ENCODE measurements at regions of chr6 and their contacts with region 1.

Region 1: GRCh38 chr6:27687154-27688013 is 214.5 kb upstream of the ZNF184 start:
- DNase-seq: peak; percentile 87
- H3K4me3 Mint-ChIP-seq: peak overlapping the region; percentile 92
- H3K27ac Mint-ChIP-seq: peak overlapping the region; percentile 89
- H3K4me1 Mint-ChIP-seq: peaks cover 5% of the 10 kb centered on the region
- H3K27me3 Mint-ChIP-seq: no peaks in the 10 kb centered on the region
- CTCF ChIP-seq: peak; percentile 86

Region 2: GRCh38 chr6:27312146-27312949 is 375.0 kb before region 1 on chr6 and contains the start of gene POM121L2:
- CTCF ChIA-PET with region 1: interaction called, 4 read pairs
- POLR2A ChIA-PET with region 1: interaction called, 4 read pairs
- intact Hi-C with region 1: loop called (anchors 5 kb)
- DNase-seq: peak; percentile 84
- H3K4me3 Mint-ChIP-seq: peak within 1 kb of the TSS; percentile 73
- H3K27ac Mint-ChIP-seq: no peak within 1 kb of the TSS
- H3K4me1 Mint-ChIP-seq: no peaks in the 10 kb centered on the region
- H3K27me3 Mint-ChIP-seq: peaks cover 12% of the 10 kb centered on the region
- CTCF ChIP-seq: peak; percentile 87
- total RNA-seq, gene POM121L2: not detected in 2 replicates

Region 3: GRCh38 chr6:27503436-27504030 is 183.9 kb before region 1 on chr6:
- CTCF ChIA-PET with region 1: no interaction called
- POLR2A ChIA-PET with region 1: interaction called, 3 read pairs
- intact Hi-C with region 1: loop called (anchors 5 kb)
- DNase-seq: peak; percentile 74
- H3K4me3 Mint-ChIP-seq: peak overlapping the region; percentile 83
- H3K27ac Mint-ChIP-seq: peak overlapping the region; percentile 84
- H3K4me1 Mint-ChIP-seq: peaks cover 11% of the 10 kb centered on the region
- H3K27me3 Mint-ChIP-seq: no peaks in the 10 kb centered on the region
- CTCF ChIP-seq: no peak

Region 4: DNA sequence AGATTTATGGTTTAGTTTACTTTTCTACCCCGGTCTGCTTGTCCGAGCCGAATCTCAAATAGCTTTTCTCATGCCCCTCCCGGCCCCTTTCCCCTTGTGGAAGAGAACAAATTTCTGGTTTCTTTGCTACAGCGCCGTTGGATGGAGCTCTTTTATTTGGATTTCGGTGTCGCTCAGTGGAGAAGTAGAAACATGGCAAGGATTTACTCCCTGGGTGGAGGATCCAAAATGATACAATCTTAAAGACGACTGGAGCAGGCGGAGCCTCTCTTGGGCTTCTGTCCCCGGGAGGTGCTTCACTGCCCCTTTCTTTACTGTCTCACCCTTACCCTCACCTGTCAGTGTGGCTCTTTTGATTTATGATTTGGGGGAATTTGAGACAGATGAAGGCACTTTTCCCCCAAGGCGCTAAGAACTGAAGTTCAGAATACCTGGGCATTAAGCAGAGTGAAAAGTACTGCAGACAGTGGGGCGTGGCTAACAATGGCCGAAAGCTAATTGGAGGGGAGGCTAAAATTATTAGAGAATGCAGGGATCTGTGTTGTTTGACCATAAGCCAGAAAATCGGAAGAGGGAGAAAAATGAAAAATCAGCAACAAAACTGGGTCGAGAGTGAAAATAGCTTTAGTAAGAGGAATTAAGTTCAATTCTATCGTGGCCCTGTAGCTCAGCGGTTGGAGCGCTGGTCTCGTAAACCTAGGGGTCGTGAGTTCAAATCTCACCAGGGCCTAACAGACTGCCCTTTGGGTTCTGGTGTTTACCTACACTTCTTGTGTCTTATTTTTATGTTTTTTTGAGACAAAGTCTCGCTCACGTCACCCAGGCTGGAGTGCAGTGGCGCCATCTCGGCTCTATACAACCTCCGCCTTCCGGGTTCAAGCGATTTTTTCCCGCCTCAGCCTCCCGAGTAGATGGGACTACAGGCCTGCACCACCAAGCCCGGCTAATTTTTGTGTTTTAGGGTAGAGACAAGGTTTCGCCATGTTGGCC is 69.4 kb before region 1 on chr6:
- CTCF ChIA-PET with region 1: interaction called, 11 read pairs
- POLR2A ChIA-PET with region 1: interaction called, 20 read pairs
- intact Hi-C with region 1: loop called (anchors 1 kb)
- DNase-seq: peak; percentile 68
- H3K4me3 Mint-ChIP-seq: peak overlapping the region; percentile 89
- H3K27ac Mint-ChIP-seq: peak overlapping the region; percentile 86
- H3K4me1 Mint-ChIP-seq: peaks cover 6% of the 10 kb centered on the region
- H3K27me3 Mint-ChIP-seq: no peaks in the 10 kb centered on the region
- CTCF ChIP-seq: peak; percentile 9

Region 5: DNA sequence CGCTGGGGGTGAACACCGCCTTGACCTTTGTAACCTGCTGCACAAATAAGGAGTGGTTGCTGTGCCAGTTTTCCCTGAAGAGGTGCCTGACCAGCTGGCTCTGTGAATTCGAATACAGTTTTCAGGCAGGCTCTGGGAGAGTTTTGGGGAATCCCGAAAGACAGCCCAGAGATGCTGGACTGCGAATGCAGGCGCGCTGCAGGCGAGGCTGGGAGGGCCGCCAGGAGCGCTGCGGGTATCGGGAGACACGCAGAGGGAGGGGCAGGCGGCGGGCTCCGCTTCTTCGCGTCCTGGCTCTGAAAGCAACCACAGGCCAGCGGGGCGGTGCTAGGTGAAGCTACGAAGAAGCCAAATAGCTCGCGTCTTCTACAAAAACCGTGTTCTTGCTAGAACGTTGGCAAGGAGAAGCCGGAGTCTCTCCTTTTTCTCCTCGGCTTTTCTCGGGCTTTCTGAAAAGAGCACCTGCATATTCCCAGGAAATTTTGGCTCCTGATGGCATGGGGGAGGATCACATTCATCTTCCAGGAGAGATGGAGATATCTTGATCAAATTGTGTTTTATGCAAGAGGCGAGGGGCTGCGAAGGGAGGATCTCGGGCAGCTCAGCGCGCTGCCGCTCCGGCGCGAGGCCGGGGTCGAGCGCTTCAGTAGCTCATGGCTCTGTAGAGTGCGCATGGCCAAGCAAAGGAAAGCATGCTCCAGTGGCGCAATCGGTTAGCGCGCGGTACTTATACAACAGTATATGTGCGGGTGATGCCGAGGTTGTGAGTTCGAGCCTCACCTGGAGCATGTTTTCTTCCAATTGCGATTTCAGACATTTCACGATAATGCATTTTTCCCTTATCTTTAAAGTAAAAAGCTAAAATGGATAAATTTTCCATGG is 56.4 kb before region 1 on chr6:
- CTCF ChIA-PET with region 1: interaction called, 3 read pairs
- POLR2A ChIA-PET with region 1: no interaction called
- intact Hi-C with region 1: loop called (anchors 1 kb)
- DNase-seq: peak; percentile 79
- H3K4me3 Mint-ChIP-seq: peak overlapping the region; percentile 85
- H3K27ac Mint-ChIP-seq: peak overlapping the region; percentile 73
- H3K4me1 Mint-ChIP-seq: no peaks in the 10 kb centered on the region
- H3K27me3 Mint-ChIP-seq: no peaks in the 10 kb centered on the region
- CTCF ChIP-seq: no peak

Region 6: DNA sequence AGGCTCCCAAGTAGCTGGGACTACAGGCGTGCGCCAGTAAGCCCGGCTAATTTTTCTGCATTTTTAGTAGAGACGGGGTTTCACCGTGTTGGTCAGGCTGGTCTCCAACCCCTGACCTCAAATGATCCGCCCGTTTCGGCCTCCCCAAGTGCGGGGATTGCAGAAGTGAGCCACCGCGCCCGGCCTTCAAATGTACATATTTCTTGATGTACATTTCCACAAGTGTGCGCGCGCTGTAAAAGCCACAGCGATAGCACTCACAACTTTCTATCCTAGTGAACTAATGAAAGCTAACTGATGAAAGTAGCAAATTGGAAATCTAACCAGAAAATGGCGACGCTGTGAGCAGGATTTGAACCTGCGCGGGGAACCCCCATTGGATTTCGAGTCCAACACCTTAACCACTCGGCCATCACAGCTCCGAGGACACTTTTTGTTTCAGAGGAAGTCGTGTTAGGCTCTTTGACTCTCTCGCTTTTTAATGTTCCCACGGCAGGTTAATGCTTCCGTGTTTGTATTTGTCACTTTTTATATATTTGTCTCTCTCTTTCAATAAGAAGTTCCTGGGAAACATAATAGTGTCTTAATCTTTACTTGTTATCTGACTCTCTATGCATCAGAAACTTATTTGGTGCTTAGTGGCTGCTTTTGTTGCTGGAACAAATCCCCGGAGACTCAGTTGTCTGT is 15.1 kb before region 1 on chr6:
- CTCF ChIA-PET with region 1: interaction called, 6 read pairs
- POLR2A ChIA-PET with region 1: interaction called, 12 read pairs
- intact Hi-C with region 1: loop called (anchors 1 kb)
- DNase-seq: peak; percentile 84
- H3K4me3 Mint-ChIP-seq: peak overlapping the region; percentile 76
- H3K27ac Mint-ChIP-seq: peak overlapping the region; percentile 77
- H3K4me1 Mint-ChIP-seq: peaks cover 12% of the 10 kb centered on the region
- H3K27me3 Mint-ChIP-seq: no peaks in the 10 kb centered on the region
- CTCF ChIP-seq: no peak

Measured in MCF 10A (cell line).